Naive thymus-derived CD4-positive, alpha-beta T cell (primary cell): ENCODE measurements at regions of chr7 and their contacts with region 1.

Region 1: GRCh38 chr7:1459522-1459892 is 237 bp upstream of the MICALL2 start:
- DNase-seq: peak; percentile 98 to 99 (median 99)
- ATAC-seq: peak; percentile 97
- H3K4me3 ChIP-seq: peak overlapping the region; percentile 73
- H3K4me3 Mint-ChIP-seq: peak overlapping the region in 8 of 10 donors; percentile 58 to 75 (median 70)
- H3K27ac ChIP-seq: peak overlapping the region; percentile 55
- H3K27ac Mint-ChIP-seq: peak overlapping the region in 1 of 9 donors; percentile 76
- H3K4me1 ChIP-seq: peaks cover 8 to 14% of the 10 kb centered on the region in 2 donors
- H3K4me1 Mint-ChIP-seq: peaks cover 7 to 25% (median 18%) of the 10 kb centered on the region in 7 donors
- H3K27me3 ChIP-seq: no peaks in the 10 kb centered on the region
- H3K27me3 Mint-ChIP-seq: peaks cover 0 to 5% (median 0%) of the 10 kb centered on the region in 5 donors

Region 2: GRCh38 chr7:1368682-1369571 is 90.6 kb before region 1 on chr7:
- CTCF ChIA-PET with region 1: no interaction called
- POLR2A ChIA-PET with region 1: no interaction called
- intact Hi-C with region 1: loop called in 1 of 2 experiments (anchors 1 kb)
- DNase-seq: peak in 2 of 9 donors; percentile 3 to 42
- ATAC-seq: peak; percentile 45
- H3K4me3 ChIP-seq: no peak overlapping the region
- H3K4me3 Mint-ChIP-seq: peak overlapping the region in 5 of 10 donors; percentile 12 to 43 (median 14)
- H3K27ac ChIP-seq: no peak overlapping the region
- H3K27ac Mint-ChIP-seq: no peak overlapping the region
- H3K4me1 ChIP-seq: no peaks in the 10 kb centered on the region
- H3K4me1 Mint-ChIP-seq: peaks cover 0 to 5% (median 0%) of the 10 kb centered on the region in 7 donors
- H3K27me3 ChIP-seq: no peaks in the 10 kb centered on the region
- H3K27me3 Mint-ChIP-seq: peaks cover 33 to 68% (median 39%) of the 10 kb centered on the region in 5 donors

Region 3: GRCh38 chr7:1473864-1474512 is 14.5 kb after region 1 on chr7:
- CTCF ChIA-PET with region 1: interaction called, 6 read pairs
- POLR2A ChIA-PET with region 1: interaction called, 7 read pairs
- intact Hi-C with region 1: loop called in 1 of 2 experiments (anchors 1 kb)
- DNase-seq: peak; percentile 77 to 89 (median 87)
- ATAC-seq: peak; percentile 90
- H3K4me3 ChIP-seq: no peak overlapping the region
- H3K4me3 Mint-ChIP-seq: peak overlapping the region in 1 of 10 donors; percentile 49
- H3K27ac ChIP-seq: peak overlapping the region; percentile 45
- H3K27ac Mint-ChIP-seq: no peak overlapping the region
- H3K4me1 ChIP-seq: peaks cover 3 to 14% of the 10 kb centered on the region in 2 donors
- H3K4me1 Mint-ChIP-seq: peaks cover 3 to 12% (median 9%) of the 10 kb centered on the region in 7 donors
- H3K27me3 ChIP-seq: no peaks in the 10 kb centered on the region
- H3K27me3 Mint-ChIP-seq: no peaks in the 10 kb centered on the region

Region 4: GRCh38 chr7:1569833-1570633 is 110.5 kb after region 1 on chr7 and contains the start of gene PSMG3:
- CTCF ChIA-PET with region 1: no interaction called
- POLR2A ChIA-PET with region 1: no interaction called
- intact Hi-C with region 1: loop called in 1 of 2 experiments (anchors 1 kb)
- DNase-seq: peak; percentile 72 to 91 (median 84)
- ATAC-seq: peak; percentile 94
- H3K4me3 ChIP-seq: peak within 1 kb of the TSS; percentile 90
- H3K4me3 Mint-ChIP-seq: peak within 1 kb of the TSS; percentile 77 to 91 (median 86)
- H3K27ac ChIP-seq: peak within 1 kb of the TSS; percentile 95
- H3K27ac Mint-ChIP-seq: peak within 1 kb of the TSS; percentile 81 to 93 (median 88)
- H3K4me1 ChIP-seq: peaks cover 3 to 16% of the 10 kb centered on the region in 2 donors
- H3K4me1 Mint-ChIP-seq: peaks cover 14 to 36% (median 26%) of the 10 kb centered on the region in 7 donors
- H3K27me3 ChIP-seq: no peaks in the 10 kb centered on the region
- H3K27me3 Mint-ChIP-seq: no peaks in the 10 kb centered on the region
- total RNA-seq, gene PSMG3: 12.1 to 31.8 (median 23.2) TPM

Region 5: DNA sequence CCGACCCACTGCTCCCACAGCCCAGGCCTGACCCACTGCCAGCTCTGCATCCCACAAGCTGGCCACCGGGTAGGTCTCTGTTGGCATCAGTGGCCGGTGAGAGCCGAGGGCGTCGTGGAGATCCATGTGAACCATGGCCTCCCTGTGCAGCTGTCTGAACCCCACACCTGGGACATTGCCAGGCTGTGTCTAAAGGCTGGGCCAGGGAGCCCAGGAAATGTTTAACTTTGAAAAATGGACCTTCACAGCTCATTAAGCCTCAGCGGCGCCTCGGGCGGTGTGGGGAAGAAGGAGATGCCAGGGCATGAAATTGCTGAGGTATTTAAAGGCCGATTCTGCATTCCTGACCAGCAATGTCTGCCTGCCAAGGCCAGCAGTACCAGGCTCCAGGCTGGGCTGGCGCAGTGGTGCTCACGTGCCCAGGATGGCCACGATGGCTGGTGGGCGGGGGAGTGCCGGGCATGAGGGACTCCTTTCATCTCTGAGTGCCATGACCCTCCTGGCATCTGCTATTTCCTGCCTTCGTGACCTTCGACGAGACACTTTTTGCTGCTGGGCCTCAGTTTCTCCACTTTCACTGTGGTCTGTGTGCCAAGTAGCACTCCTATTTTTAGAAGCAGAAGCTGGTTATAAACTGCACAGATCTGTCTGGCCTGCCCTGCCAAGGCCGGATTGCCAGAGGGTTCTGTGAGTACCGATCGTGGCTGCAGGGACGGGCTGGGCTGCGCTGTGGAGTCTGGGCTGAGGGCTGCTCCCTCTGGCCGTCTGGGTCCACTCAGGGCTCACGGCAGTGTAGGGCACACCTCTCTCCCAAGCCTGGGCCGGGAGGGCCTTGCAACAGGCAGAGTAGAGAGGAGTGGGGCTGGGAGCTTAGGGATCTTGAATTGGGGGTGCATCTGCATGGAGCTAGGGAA is 232.4 kb after region 1 on chr7:
- CTCF ChIA-PET with region 1: no interaction called
- POLR2A ChIA-PET with region 1: no interaction called
- intact Hi-C with region 1: no loop called
- DNase-seq: peak in 1 of 9 donors; percentile 18
- ATAC-seq: no peak
- H3K4me3 ChIP-seq: no peak overlapping the region
- H3K4me3 Mint-ChIP-seq: no peak overlapping the region
- H3K27ac ChIP-seq: no peak overlapping the region
- H3K27ac Mint-ChIP-seq: no peak overlapping the region
- H3K4me1 ChIP-seq: no peaks in the 10 kb centered on the region
- H3K4me1 Mint-ChIP-seq: peaks cover 0 to 2% (median 0%) of the 10 kb centered on the region in 7 donors
- H3K27me3 ChIP-seq: peaks cover 0 to 2% of the 10 kb centered on the region in 2 donors
- H3K27me3 Mint-ChIP-seq: peaks cover 7 to 27% (median 25%) of the 10 kb centered on the region in 5 donors